ENCODE measurements at regions of chr20 and their contacts with region 1.

Region 1: DNA sequence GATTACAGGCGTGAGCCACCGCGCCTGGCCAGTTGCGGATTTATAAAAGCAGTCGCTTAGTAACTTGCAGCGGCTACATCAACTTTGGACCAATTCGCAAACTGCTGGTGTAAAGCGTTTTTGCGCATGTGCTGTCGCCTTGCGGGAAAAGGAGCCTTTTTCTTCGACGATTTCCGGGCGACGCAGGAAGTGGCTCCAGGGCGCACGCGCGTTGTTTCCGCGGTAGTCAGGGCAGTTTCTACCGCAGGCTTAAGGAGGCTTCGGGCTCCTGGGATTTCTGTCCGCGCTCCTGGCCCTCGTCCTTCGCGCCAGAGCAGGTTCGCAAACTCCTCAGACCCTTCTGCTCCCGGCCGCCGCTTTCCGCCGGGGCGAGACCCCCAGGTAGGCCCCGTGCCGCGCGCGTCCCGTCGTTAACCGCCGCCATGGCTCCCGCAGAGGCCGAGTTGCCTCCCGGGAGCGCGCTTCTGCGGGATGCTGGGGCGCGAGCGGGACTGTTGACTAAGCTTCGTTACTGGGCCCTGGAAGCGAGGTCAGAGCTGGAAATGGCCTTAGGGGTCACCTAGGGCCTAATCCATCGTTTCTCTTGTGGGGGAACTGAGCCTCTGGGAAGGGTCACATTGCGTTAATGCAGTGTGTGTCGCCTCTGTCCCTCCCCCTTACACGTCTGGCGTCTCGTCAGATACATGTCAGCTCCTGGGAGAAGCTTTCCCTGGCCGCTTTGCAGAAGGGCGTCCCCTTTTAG is at the start of gene RAE1:
- DNase-seq: peak; percentile 81 to 92 (median 89)
- ATAC-seq: peak; percentile 88
- H3K4me3 ChIP-seq: peak within 1 kb of the TSS; percentile 81
- H3K4me3 Mint-ChIP-seq: peak within 1 kb of the TSS; percentile 89 to 97 (median 92)
- H3K27ac ChIP-seq: peak within 1 kb of the TSS; percentile 90
- H3K27ac Mint-ChIP-seq: peak within 1 kb of the TSS; percentile 81 to 93 (median 90)
- H3K4me1 ChIP-seq: peaks cover 0 to 19% of the 10 kb centered on the region in 2 donors
- H3K4me1 Mint-ChIP-seq: peaks cover 14 to 46% (median 29%) of the 10 kb centered on the region in 7 donors
- H3K27me3 ChIP-seq: no peaks in the 10 kb centered on the region
- H3K27me3 Mint-ChIP-seq: peaks cover 0 to 14% (median 0%) of the 10 kb centered on the region in 5 donors
- total RNA-seq, gene RAE1: 31.0 to 41.3 (median 35.2) TPM

Region 2: GRCh38 chr20:56187534-56188198 is 1163.5 kb before region 1 on chr20:
- CTCF ChIA-PET with region 1: no interaction called
- POLR2A ChIA-PET with region 1: no interaction called
- intact Hi-C with region 1: loop called in 1 of 2 experiments (anchors 5 kb)
- DNase-seq: no peak
- ATAC-seq: no peak
- H3K4me3 ChIP-seq: no peak overlapping the region
- H3K4me3 Mint-ChIP-seq: no peak overlapping the region
- H3K27ac ChIP-seq: no peak overlapping the region
- H3K27ac Mint-ChIP-seq: no peak overlapping the region
- H3K4me1 ChIP-seq: no peaks in the 10 kb centered on the region
- H3K4me1 Mint-ChIP-seq: no peaks in the 10 kb centered on the region
- H3K27me3 ChIP-seq: no peaks in the 10 kb centered on the region
- H3K27me3 Mint-ChIP-seq: peaks cover 0 to 13% (median 0%) of the 10 kb centered on the region in 5 donors

Region 3: GRCh38 chr20:56358596-56359211 is 992.5 kb before region 1 on chr20 and contains the start of gene FAM210B:
- CTCF ChIA-PET with region 1: interaction called, 4 read pairs
- POLR2A ChIA-PET with region 1: no interaction called
- intact Hi-C with region 1: loop called in 1 of 2 experiments (anchors 2 kb)
- DNase-seq: peak; percentile 63 to 82 (median 79)
- ATAC-seq: peak; percentile 99
- H3K4me3 ChIP-seq: peak within 1 kb of the TSS; percentile 72
- H3K4me3 Mint-ChIP-seq: peak within 1 kb of the TSS; percentile 88 to 96 (median 92)
- H3K27ac ChIP-seq: peak within 1 kb of the TSS; percentile 71
- H3K27ac Mint-ChIP-seq: peak within 1 kb of the TSS; percentile 54 to 91 (median 81)
- H3K4me1 ChIP-seq: peaks cover 0 to 14% of the 10 kb centered on the region in 2 donors
- H3K4me1 Mint-ChIP-seq: peaks cover 13 to 29% (median 22%) of the 10 kb centered on the region in 7 donors
- H3K27me3 ChIP-seq: no peaks in the 10 kb centered on the region
- H3K27me3 Mint-ChIP-seq: peaks cover 0 to 4% (median 0%) of the 10 kb centered on the region in 5 donors
- total RNA-seq, gene FAM210B: 8.1 to 31.8 (median 19.4) TPM

Region 4: GRCh38 chr20:56554869-56555268 is 796.3 kb before region 1 on chr20:
- CTCF ChIA-PET with region 1: no interaction called
- POLR2A ChIA-PET with region 1: no interaction called
- intact Hi-C with region 1: loop called in 1 of 2 experiments (anchors 2 kb)
- DNase-seq: no peak
- ATAC-seq: peak; percentile 58
- H3K4me3 ChIP-seq: no peak overlapping the region
- H3K4me3 Mint-ChIP-seq: peak overlapping the region in 1 of 10 donors; percentile 37
- H3K27ac ChIP-seq: no peak overlapping the region
- H3K27ac Mint-ChIP-seq: no peak overlapping the region
- H3K4me1 ChIP-seq: no peaks in the 10 kb centered on the region
- H3K4me1 Mint-ChIP-seq: peaks cover 0 to 8% (median 0%) of the 10 kb centered on the region in 7 donors
- H3K27me3 ChIP-seq: no peaks in the 10 kb centered on the region
- H3K27me3 Mint-ChIP-seq: peaks cover 0 to 2% (median 0%) of the 10 kb centered on the region in 5 donors

Region 5: GRCh38 chr20:56616716-56617115 is 734.5 kb before region 1 on chr20:
- CTCF ChIA-PET with region 1: no interaction called
- POLR2A ChIA-PET with region 1: no interaction called
- intact Hi-C with region 1: no loop called
- DNase-seq: no peak
- ATAC-seq: no peak
- H3K4me3 ChIP-seq: no peak overlapping the region
- H3K4me3 Mint-ChIP-seq: no peak overlapping the region
- H3K27ac ChIP-seq: no peak overlapping the region
- H3K27ac Mint-ChIP-seq: no peak overlapping the region
- H3K4me1 ChIP-seq: no peaks in the 10 kb centered on the region
- H3K4me1 Mint-ChIP-seq: no peaks in the 10 kb centered on the region
- H3K27me3 ChIP-seq: no peaks in the 10 kb centered on the region
- H3K27me3 Mint-ChIP-seq: peaks cover 0 to 8% (median 0%) of the 10 kb centered on the region in 5 donors

Region 6: GRCh38 chr20:57089691-57090150 is 261.5 kb before region 1 on chr20:
- CTCF ChIA-PET with region 1: interaction called, 3 read pairs
- POLR2A ChIA-PET with region 1: no interaction called
- intact Hi-C with region 1: loop called in 1 of 2 experiments (anchors 1 kb)
- DNase-seq: peak; percentile 7 to 69 (median 39)
- ATAC-seq: peak; percentile 64
- H3K4me3 ChIP-seq: no peak overlapping the region
- H3K4me3 Mint-ChIP-seq: no peak overlapping the region
- H3K27ac ChIP-seq: no peak overlapping the region
- H3K27ac Mint-ChIP-seq: no peak overlapping the region
- H3K4me1 ChIP-seq: no peaks in the 10 kb centered on the region
- H3K4me1 Mint-ChIP-seq: peaks cover 4 to 28% (median 13%) of the 10 kb centered on the region in 7 donors
- H3K27me3 ChIP-seq: no peaks in the 10 kb centered on the region
- H3K27me3 Mint-ChIP-seq: peaks cover 0 to 23% (median 13%) of the 10 kb centered on the region in 5 donors

Region 7: DNA sequence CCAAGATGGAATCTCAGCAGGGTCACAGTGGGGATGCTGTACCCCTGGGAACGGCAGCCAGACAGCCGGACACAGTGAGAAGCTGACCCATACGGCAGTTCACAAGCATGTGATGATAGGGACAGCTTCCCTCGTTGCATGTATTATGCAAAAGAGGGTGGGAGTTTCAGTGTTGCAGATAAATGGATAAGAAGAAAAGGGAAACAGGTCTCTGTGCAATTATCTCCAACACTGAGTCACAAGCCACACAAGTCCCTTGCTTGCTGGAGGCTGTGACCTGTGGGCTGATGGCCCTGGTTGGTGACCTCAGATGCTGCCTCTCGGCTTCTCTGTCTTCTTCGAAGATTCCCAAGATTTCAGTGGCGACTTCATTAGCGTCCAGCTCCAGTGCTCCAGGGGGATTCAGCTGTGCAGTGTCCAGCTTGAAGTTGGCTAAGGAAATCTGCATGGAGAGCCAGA is 42.4 kb before region 1 on chr20:
- CTCF ChIA-PET with region 1: no interaction called
- POLR2A ChIA-PET with region 1: no interaction called
- intact Hi-C with region 1: no loop called
- DNase-seq: no peak
- ATAC-seq: no peak
- H3K4me3 ChIP-seq: no peak overlapping the region
- H3K4me3 Mint-ChIP-seq: no peak overlapping the region
- H3K27ac ChIP-seq: no peak overlapping the region
- H3K27ac Mint-ChIP-seq: no peak overlapping the region
- H3K4me1 ChIP-seq: no peaks in the 10 kb centered on the region
- H3K4me1 Mint-ChIP-seq: no peaks in the 10 kb centered on the region
- H3K27me3 ChIP-seq: peaks cover 0 to under 1% of the 10 kb centered on the region in 2 donors
- H3K27me3 Mint-ChIP-seq: peaks cover 3 to 22% (median 10%) of the 10 kb centered on the region in 5 donors

Region 8: DNA sequence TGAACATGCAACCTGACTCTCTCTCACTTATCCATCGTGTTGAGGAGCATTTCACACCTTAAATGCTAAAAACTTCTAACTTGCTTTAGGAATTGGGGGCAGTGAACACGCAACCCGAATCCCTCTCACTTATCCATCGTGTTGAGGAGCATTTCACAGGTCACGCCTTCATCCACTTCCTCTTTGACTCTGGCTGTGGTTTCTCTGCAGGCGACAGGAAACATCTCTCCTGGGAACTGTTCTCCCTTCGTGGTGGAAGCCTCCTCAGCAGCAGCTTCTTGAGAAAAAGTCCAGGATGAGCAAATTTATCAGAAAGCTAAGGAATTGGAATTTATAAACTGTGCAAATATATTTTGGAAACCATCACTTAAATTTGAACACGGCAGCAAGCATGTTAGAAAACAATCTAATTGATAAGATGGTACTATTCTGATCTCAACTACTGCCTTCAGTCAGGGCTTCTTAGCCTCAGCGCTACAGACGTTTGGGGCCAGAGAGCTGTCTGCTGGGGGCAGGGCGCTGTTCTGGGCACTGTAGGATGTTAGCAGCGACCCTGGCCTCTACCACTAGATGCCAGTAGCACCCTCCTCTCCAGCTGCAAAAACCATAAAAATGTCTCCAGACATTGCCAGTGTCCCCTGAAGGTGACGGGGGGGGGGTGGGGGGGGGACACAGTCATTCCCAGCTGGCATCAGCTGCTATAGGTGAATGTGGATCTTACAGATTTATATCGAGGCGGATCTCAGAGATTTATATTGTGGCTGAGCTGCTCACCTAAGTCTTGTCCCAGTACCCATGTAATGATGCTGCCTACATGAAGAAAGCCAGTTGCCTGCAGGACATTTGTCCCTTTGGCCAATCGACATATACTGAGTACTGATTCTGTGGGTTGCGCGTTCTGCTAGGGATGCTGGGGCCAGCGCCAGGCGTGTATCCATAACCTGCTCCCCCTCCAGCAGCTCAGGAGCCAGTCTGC is 147.5 kb after region 1 on chr20:
- CTCF ChIA-PET with region 1: interaction called, 6 read pairs
- POLR2A ChIA-PET with region 1: no interaction called
- intact Hi-C with region 1: loop called in 1 of 2 experiments (anchors 1 kb)
- DNase-seq: peak in 5 of 9 donors; percentile 19 to 43 (median 24)
- ATAC-seq: peak; percentile 78
- H3K4me3 ChIP-seq: no peak overlapping the region
- H3K4me3 Mint-ChIP-seq: peak overlapping the region in 5 of 10 donors; percentile 3 to 33 (median 20)
- H3K27ac ChIP-seq: no peak overlapping the region
- H3K27ac Mint-ChIP-seq: peak overlapping the region in 2 of 9 donors; percentile 55 to 60
- H3K4me1 ChIP-seq: peaks cover 6 to 11% of the 10 kb centered on the region in 2 donors
- H3K4me1 Mint-ChIP-seq: peaks cover 12 to 15% (median 13%) of the 10 kb centered on the region in 7 donors
- H3K27me3 ChIP-seq: peaks cover 0 to 5% of the 10 kb centered on the region in 2 donors
- H3K27me3 Mint-ChIP-seq: peaks cover 11 to 72% (median 30%) of the 10 kb centered on the region in 5 donors

Region 9: GRCh38 chr20:57718490-57719271 is 367.5 kb after region 1 on chr20:
- CTCF ChIA-PET with region 1: no interaction called
- POLR2A ChIA-PET with region 1: no interaction called
- intact Hi-C with region 1: loop called in 1 of 2 experiments (anchors 10 kb)
- DNase-seq: peak; percentile 59 to 90 (median 87)
- ATAC-seq: peak; percentile 98
- H3K4me3 ChIP-seq: peak overlapping the region; percentile 49
- H3K4me3 Mint-ChIP-seq: peak overlapping the region; percentile 53 to 79 (median 70)
- H3K27ac ChIP-seq: peak overlapping the region; percentile 52
- H3K27ac Mint-ChIP-seq: peak overlapping the region in 8 of 9 donors; percentile 41 to 81 (median 58)
- H3K4me1 ChIP-seq: peaks cover 5 to 7% of the 10 kb centered on the region in 2 donors
- H3K4me1 Mint-ChIP-seq: peaks cover 0 to 26% (median 12%) of the 10 kb centered on the region in 7 donors
- H3K27me3 ChIP-seq: no peaks in the 10 kb centered on the region
- H3K27me3 Mint-ChIP-seq: peaks cover 0 to 25% (median 0%) of the 10 kb centered on the region in 5 donors

Region 10: DNA sequence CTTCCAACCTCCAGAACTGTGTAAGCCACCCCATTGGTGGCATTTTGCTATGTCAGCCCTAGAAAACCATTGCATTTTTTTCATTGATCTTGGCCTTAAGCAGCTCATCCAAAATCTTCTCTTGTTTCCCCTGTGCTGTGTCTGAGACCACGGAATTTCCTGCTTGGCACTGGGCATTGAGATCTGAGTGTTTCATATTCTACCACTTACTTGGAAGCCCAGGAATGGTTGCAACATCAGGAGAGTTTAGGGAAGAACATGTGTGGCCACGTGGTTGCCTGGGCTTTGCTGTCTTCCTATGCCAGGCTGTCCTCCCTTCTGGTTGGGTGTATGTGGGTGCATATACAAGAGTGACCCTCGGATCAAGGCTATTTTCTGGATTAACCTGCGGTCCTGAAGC is 497.9 kb after region 1 on chr20:
- CTCF ChIA-PET with region 1: no interaction called
- POLR2A ChIA-PET with region 1: no interaction called
- intact Hi-C with region 1: no loop called
- DNase-seq: no peak
- ATAC-seq: no peak
- H3K4me3 ChIP-seq: no peak overlapping the region
- H3K4me3 Mint-ChIP-seq: no peak overlapping the region
- H3K27ac ChIP-seq: no peak overlapping the region
- H3K27ac Mint-ChIP-seq: no peak overlapping the region
- H3K4me1 ChIP-seq: no peaks in the 10 kb centered on the region
- H3K4me1 Mint-ChIP-seq: no peaks in the 10 kb centered on the region
- H3K27me3 ChIP-seq: no peaks in the 10 kb centered on the region
- H3K27me3 Mint-ChIP-seq: peaks cover 0 to 12% (median 0%) of the 10 kb centered on the region in 5 donors

Measured in naive thymus-derived CD4-positive, alpha-beta T cell (primary cell).